Posterior cingulate gyrus (tissue), 11 donors: ENCODE measurements at regions of chr5 and their contacts with region 1.

Region 1: DNA sequence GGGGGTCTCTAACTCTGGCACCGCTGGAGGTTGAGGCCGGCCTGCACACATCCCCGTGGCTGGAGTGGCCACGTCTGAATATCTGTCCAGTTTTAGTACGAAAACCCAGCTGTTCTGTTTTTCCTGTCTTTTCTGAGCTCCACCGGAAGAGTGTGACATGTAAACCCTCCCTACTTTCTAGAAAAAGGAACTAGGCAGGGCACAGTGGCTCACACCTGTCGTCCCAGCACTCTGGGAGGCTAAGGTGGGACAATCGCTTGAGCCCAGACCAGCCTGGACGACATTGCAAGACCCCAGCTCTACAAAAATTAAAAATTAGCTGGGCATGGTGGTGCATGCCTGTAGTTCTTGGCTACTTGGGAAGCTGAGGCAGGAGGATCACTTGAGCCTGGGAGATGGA is 8.2 kb upstream of the PHYKPL start:
- DNase-seq: peak in 2 of 10 donors; percentile 43 to 63

Region 2: DNA sequence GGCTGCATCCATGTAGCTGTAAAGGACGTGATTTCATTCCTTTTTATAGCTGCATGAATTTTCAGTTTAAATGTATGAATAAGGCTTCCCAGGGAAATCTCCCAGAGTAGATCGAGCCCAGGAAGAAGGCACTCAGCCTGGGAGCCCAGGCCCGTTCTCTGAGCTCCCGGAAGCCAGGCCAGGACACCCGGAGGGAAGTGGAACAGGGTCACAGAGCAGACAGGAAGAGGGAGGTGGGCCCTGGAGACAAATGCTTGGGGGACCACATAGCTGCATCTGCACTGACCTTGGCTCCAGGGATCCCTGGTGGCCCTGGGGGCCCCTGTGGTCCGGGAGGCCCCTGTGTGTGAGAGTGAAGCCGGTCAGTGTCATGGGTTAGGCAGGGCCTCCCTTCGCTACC is 11.5 kb after region 1 on chr5:
- intact Hi-C with region 1: loop called (anchors 1 kb)
- DNase-seq: no peak